ENCODE measurements at regions of chr11 and their contacts with region 1.

Region 1: DNA sequence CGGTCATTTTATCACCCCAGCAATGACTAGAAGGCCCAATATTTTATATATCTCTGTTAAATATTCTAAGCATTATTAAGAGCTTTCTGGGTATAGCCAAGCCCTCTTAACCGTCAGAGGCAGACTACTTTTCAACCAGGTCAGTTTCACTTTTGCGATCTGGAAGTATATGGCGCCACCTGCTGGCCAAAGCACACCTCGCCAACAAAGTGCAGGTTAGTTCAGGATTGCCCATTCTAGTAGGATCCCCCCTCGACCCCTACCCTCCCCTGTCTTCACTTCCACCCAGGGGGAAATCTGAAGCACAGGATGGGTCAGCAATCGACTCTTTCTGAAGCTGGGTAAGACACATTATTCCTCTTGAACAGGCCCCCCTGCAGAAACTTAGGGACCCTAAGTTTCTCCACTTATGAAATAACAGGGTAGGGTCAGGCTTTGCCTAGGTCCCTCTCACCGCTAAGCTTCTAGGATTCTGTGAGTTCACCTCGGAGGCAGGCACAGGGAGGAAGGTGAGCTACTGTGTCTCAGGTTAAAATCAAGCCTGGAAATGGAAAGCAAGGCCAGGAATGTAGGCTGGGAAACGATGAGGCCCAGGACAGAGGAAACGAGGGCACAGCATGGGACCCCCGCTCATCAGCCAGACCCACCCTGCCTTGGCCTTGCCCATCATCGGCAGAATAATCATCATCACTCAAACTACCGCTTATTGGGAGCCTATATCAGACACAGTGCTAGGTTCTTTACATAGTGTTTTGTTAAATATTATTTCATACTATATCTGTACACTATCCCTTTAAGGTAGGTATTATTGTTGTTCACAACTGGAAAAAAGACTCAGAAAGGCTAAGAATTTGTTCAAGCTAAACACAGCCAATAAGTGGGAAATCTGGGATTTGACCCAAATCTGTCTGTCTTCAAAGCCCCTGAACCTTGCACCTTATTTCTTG is 35.6 kb downstream of the KCNJ1 start:
- DNase-seq: peak; percentile 78 to 86
- H3K4me3 ChIP-seq: no peak overlapping the region
- H3K27ac ChIP-seq: no peak overlapping the region
- H3K4me1 ChIP-seq: peaks cover 0 to 4% (median 2%) of the 10 kb centered on the region in 4 donors
- H3K27me3 ChIP-seq: peaks cover 0 to 18% of the 10 kb centered on the region in 2 donors
- CTCF ChIP-seq: peak; percentile 75 to 88

Region 2: GRCh38 chr11:128039140-128040021 is 792.1 kb before region 1 on chr11:
- intact Hi-C with region 1: loop called (anchors 10 kb)
- DNase-seq: peak; percentile 86 to 87
- H3K4me3 ChIP-seq: no peak overlapping the region
- H3K27ac ChIP-seq: no peak overlapping the region
- H3K4me1 ChIP-seq: no peaks in the 10 kb centered on the region
- H3K27me3 ChIP-seq: no peaks in the 10 kb centered on the region
- CTCF ChIP-seq: no peak

Measured in tibial artery (tissue), 4 donors.